CD4-positive, alpha-beta memory T cell (primary cell): ENCODE measurements at regions of chr9 and their contacts with region 1.

Region 1: GRCh38 chr9:32579706-32580331 is 6.9 kb upstream of the NDUFB6 start:
- DNase-seq: peak; percentile 68 to 75 (median 72)
- H3K4me3 ChIP-seq: no peak overlapping the region
- H3K4me3 Mint-ChIP-seq: no peak overlapping the region
- H3K27ac ChIP-seq: no peak overlapping the region
- H3K27ac Mint-ChIP-seq: no peak overlapping the region
- H3K4me1 ChIP-seq: no peaks in the 10 kb centered on the region
- H3K4me1 Mint-ChIP-seq: peaks cover 0 to 5% (median 0%) of the 10 kb centered on the region in 4 donors
- H3K27me3 ChIP-seq: peaks cover 3% of the 10 kb centered on the region
- H3K27me3 Mint-ChIP-seq: peaks cover 7 to 11% of the 10 kb centered on the region in 2 donors

Region 2: DNA sequence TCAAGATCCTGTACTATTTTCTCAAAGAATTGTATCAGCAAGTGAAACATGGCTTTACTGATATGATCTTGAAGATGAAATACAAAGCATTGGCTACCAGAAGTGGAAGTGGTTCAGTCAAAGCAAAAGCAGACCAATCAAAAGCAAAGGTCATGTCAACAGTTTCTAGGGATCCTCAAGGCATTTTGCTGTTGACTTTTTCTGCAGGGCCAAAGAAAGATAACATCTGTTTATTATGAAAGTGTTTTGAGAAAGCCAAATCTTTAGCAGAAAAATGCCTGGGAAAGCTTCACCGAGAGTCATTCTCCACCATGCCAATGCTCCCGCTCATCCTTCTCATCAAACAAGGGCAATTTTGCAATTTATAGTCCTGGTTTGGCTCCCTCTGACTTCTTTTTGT is 285.7 kb before region 1 on chr9:
- CTCF ChIA-PET with region 1: no interaction called
- POLR2A ChIA-PET with region 1: no interaction called
- intact Hi-C with region 1: no loop called
- DNase-seq: no peak
- H3K4me3 ChIP-seq: no peak overlapping the region
- H3K4me3 Mint-ChIP-seq: no peak overlapping the region
- H3K27ac ChIP-seq: no peak overlapping the region
- H3K27ac Mint-ChIP-seq: no peak overlapping the region
- H3K4me1 ChIP-seq: no peaks in the 10 kb centered on the region
- H3K4me1 Mint-ChIP-seq: no peaks in the 10 kb centered on the region
- H3K27me3 ChIP-seq: no peaks in the 10 kb centered on the region
- H3K27me3 Mint-ChIP-seq: peaks cover 4 to 12% of the 10 kb centered on the region in 2 donors

Region 3: DNA sequence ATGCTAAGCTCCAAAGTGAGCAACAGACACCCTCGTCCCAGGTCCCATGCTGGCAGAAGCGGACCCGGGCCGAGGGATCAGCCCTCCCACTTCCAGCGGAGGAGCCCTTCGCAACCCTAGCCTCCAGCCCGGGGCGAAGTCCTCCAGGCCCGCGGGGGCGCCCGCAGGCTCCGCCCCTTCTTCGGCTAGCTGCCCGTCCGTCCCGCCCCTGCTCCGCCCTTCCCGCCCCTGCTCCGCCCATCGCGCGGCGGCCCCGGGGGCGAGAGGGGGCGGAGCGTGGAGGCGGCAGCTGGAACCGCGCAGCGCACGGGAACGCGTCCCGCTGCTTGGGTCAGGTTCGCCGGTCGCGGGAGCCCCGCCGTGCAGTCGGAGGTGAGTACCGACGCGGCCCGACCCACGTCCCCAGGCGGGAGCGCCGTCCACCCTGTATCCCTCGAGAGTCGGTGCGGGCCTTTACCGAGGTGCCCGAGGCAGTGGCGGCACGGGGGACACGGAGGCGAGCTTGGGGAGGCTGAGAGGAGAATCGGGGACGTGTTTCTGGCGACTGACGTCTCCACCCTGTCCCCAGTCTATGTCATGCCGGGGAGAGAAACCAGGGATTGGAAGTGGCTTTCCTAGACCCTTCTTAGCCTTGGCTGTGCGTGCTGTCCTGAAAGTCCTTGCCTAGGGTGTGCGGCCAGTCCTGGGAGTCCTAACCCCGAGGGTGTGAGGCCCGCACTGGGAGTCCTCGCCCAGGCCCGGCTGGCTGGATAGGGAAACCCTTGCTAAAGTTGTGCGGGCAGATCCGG is 195.3 kb before region 1 on chr9 and contains the start of gene ACO1:
- CTCF ChIA-PET with region 1: interaction called, 659 read pairs
- POLR2A ChIA-PET with region 1: interaction called, 48 read pairs
- intact Hi-C with region 1: loop called (anchors 1 kb)
- DNase-seq: peak; percentile 77 to 89 (median 84)
- H3K4me3 ChIP-seq: peak within 1 kb of the TSS; percentile 79 to 91
- H3K4me3 Mint-ChIP-seq: peak within 1 kb of the TSS; percentile 81 to 90 (median 88)
- H3K27ac ChIP-seq: peak within 1 kb of the TSS; percentile 55
- H3K27ac Mint-ChIP-seq: peak within 1 kb of the TSS in 6 of 7 donors; percentile 3 to 83 (median 58)
- H3K4me1 ChIP-seq: peaks cover 20% of the 10 kb centered on the region
- H3K4me1 Mint-ChIP-seq: peaks cover 12 to 20% (median 17%) of the 10 kb centered on the region in 4 donors
- H3K27me3 ChIP-seq: no peaks in the 10 kb centered on the region
- H3K27me3 Mint-ChIP-seq: peaks cover 3 to 7% of the 10 kb centered on the region in 2 donors
- total RNA-seq, gene ACO1: 7.9 to 9.1 TPM

Region 4: DNA sequence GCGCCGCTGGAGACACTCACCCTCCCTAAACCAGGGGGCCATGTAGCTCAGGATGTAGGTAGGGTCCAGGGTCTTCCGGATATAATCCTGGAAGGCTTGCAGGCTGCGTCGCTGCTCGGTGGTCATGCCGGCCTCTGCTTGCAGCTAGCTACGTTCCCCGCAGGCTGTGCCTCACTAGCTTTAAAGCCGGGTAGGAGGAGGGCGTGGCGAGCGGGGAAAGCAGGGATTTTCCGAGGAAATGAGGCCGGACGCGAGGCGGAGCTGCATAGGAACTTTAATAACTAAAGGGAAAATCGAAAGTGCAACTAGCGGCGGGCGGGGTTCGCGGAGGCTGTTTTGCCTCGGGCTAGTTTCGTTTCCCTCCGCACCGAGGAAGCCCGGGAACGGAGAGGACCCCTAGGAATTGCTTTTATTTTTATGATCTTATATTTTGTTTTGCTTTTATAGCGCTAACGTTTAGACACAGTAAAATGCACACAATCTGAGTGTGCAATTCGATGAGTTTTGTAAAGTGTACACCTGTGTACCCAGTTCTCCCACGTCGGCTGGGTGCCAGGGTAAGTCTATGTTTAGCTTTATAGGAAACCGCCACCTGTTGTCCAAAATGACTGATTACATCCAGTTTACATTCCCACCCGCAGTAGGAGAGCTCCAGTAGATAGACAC is 53.6 kb before region 1 on chr9 and contains the start of gene RIGI:
- CTCF ChIA-PET with region 1: interaction called, 50 read pairs
- POLR2A ChIA-PET with region 1: no interaction called
- intact Hi-C with region 1: no loop called
- DNase-seq: peak; percentile 80 to 92 (median 81)
- H3K4me3 ChIP-seq: peak within 1 kb of the TSS; percentile 78 to 93
- H3K4me3 Mint-ChIP-seq: peak within 1 kb of the TSS; percentile 91 to 99 (median 97)
- H3K27ac ChIP-seq: peak within 1 kb of the TSS; percentile 94
- H3K27ac Mint-ChIP-seq: peak within 1 kb of the TSS; percentile 93 to 98 (median 97)
- H3K4me1 ChIP-seq: peaks cover 46% of the 10 kb centered on the region
- H3K4me1 Mint-ChIP-seq: peaks cover 40 to 70% (median 54%) of the 10 kb centered on the region in 4 donors
- H3K27me3 ChIP-seq: no peaks in the 10 kb centered on the region
- H3K27me3 Mint-ChIP-seq: no peaks in the 10 kb centered on the region
- total RNA-seq, gene RIGI: 29.0 to 32.0 TPM

Region 5: DNA sequence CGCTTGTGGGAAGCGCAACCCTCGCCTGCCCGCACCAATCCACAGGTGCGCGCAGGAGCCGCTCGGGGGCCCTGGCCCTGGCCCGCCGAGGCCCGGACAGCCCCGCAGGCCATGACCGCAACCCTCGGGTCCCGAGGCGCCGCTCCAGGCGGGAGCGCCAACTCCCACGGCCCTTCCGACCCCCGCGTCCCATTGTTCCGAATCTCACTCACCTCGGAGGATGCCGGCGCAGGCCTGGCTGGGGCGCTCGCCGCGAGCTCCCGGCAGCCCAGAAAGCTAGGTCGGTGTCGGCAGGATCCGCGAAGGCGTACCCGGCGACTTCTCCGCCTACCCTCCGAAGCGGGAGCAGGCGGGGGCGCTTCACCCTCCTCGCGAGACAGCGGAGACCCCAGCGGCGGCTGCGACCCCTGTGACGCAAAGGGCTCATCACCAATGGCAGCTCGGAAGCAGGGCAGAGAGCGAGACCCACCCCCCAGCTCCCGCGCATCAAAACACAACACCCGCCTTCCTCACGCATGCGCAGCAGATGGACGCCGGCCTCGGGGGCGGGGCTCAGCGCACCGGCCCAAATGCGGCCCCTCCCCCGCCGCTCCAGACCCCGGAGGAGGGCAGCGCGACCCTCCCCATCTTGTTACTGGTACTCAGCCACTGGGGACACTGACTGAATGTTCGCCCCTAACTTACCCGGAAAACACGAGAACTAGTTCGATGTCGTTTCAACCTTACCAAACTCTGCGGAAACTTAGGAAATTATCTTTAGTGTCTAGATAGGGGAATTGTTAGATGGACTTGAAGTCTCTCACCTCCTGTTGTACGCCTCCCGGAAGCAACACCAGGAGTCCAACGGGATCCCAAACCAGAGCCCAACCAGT is 29.0 kb before region 1 on chr9:
- CTCF ChIA-PET with region 1: interaction called, 72 read pairs
- POLR2A ChIA-PET with region 1: interaction called, 69 read pairs
- intact Hi-C with region 1: no loop called
- DNase-seq: peak; percentile 95 to 99 (median 95)
- H3K4me3 ChIP-seq: peak overlapping the region; percentile 93 to 98
- H3K4me3 Mint-ChIP-seq: peak overlapping the region; percentile 92 to 99 (median 97)
- H3K27ac ChIP-seq: peak overlapping the region; percentile 88
- H3K27ac Mint-ChIP-seq: peak overlapping the region; percentile 92 to 100 (median 98)
- H3K4me1 ChIP-seq: peaks cover 47% of the 10 kb centered on the region
- H3K4me1 Mint-ChIP-seq: peaks cover 28 to 66% (median 49%) of the 10 kb centered on the region in 4 donors
- H3K27me3 ChIP-seq: no peaks in the 10 kb centered on the region
- H3K27me3 Mint-ChIP-seq: no peaks in the 10 kb centered on the region

Region 6: DNA sequence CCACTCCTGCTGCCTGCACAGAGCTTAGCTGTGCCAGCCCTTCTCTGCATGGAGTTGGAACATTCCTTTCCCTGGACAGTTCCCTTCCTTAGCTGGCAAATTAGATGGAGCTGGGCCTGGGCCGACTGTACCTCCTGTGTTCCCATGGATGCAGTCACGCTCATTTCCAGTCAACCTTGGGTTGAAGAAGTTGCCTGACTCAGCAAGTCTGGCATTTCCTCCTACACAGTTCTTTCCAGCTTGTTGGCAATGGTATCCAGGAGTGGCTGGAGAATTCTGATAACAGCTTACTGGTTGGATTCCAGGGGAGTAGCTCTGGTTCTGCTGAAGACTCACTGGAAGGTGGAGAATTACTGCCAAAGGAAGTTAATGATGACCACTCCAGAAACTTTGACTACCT is 64.9 kb after region 1 on chr9:
- CTCF ChIA-PET with region 1: no interaction called
- POLR2A ChIA-PET with region 1: no interaction called
- intact Hi-C with region 1: no loop called
- DNase-seq: no peak
- H3K4me3 ChIP-seq: no peak overlapping the region
- H3K4me3 Mint-ChIP-seq: no peak overlapping the region
- H3K27ac ChIP-seq: no peak overlapping the region
- H3K27ac Mint-ChIP-seq: no peak overlapping the region
- H3K4me1 ChIP-seq: no peaks in the 10 kb centered on the region
- H3K4me1 Mint-ChIP-seq: no peaks in the 10 kb centered on the region
- H3K27me3 ChIP-seq: no peaks in the 10 kb centered on the region
- H3K27me3 Mint-ChIP-seq: peaks cover 21 to 24% of the 10 kb centered on the region in 2 donors

Region 7: GRCh38 chr9:32968101-32969011 is 388.5 kb after region 1 on chr9:
- CTCF ChIA-PET with region 1: interaction called, 47 read pairs
- POLR2A ChIA-PET with region 1: no interaction called
- intact Hi-C with region 1: loop called (anchors 1 kb)
- DNase-seq: peak in 4 of 5 donors; percentile 28 to 53 (median 38)
- H3K4me3 ChIP-seq: no peak overlapping the region
- H3K4me3 Mint-ChIP-seq: no peak overlapping the region
- H3K27ac ChIP-seq: no peak overlapping the region
- H3K27ac Mint-ChIP-seq: peak overlapping the region in 1 of 7 donors; percentile 65
- H3K4me1 ChIP-seq: no peaks in the 10 kb centered on the region
- H3K4me1 Mint-ChIP-seq: peaks cover 2 to 4% (median 3%) of the 10 kb centered on the region in 4 donors
- H3K27me3 ChIP-seq: no peaks in the 10 kb centered on the region
- H3K27me3 Mint-ChIP-seq: no peaks in the 10 kb centered on the region

Region 8: GRCh38 chr9:33024966-33025571 is 445.2 kb after region 1 on chr9 and contains the start of gene DNAJA1:
- CTCF ChIA-PET with region 1: no interaction called
- POLR2A ChIA-PET with region 1: no interaction called
- intact Hi-C with region 1: no loop called
- DNase-seq: peak; percentile 92 to 98 (median 97)
- H3K4me3 ChIP-seq: peak within 1 kb of the TSS; percentile 96 to 100
- H3K4me3 Mint-ChIP-seq: peak within 1 kb of the TSS; percentile 92 to 99 (median 96)
- H3K27ac ChIP-seq: peak within 1 kb of the TSS; percentile 100
- H3K27ac Mint-ChIP-seq: peak within 1 kb of the TSS; percentile 94 to 98 (median 97)
- H3K4me1 ChIP-seq: peaks cover 63% of the 10 kb centered on the region
- H3K4me1 Mint-ChIP-seq: peaks cover 41 to 82% (median 66%) of the 10 kb centered on the region in 4 donors
- H3K27me3 ChIP-seq: no peaks in the 10 kb centered on the region
- H3K27me3 Mint-ChIP-seq: no peaks in the 10 kb centered on the region
- total RNA-seq, gene DNAJA1: 79.8 to 84.4 TPM

Region 9: DNA sequence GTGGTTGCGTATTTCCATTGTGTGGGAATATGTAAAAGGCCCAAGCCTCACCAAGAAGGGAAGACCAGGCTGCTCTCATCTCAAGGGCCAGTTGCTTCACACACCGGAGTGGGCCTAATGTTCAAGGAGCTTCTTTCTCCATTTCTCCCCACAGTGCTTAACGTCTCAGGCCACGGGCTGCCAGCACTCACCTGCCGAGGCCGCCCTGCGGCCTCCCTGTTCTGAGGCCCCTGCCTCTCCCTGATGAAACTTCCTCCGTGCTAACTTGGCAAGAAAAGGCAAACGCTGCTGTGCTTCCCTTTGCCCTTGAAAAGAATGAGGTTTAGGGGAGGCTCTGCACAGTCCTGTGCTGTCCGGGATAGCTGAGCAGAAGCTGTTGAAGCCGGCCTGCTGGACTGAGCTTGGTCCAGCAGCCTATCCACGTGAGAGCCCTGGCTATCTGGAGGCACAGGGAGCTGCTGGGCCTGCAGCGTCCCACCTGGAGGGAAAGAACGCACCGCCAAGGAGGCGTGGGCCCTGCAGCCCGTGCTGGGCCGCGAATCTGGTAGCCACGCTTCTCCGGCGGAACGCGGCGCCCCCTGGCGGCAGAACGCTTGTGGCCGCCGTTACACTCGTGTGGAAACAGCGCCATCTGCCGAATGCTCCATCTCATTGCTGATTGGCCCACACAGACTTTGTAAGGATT is 1142.0 kb after region 1 on chr9:
- CTCF ChIA-PET with region 1: no interaction called
- POLR2A ChIA-PET with region 1: no interaction called
- intact Hi-C with region 1: loop called (anchors 10 kb)
- DNase-seq: peak; percentile 79 to 85 (median 84)
- H3K4me3 ChIP-seq: no peak overlapping the region
- H3K4me3 Mint-ChIP-seq: peak overlapping the region in 1 of 8 donors; percentile 27
- H3K27ac ChIP-seq: no peak overlapping the region
- H3K27ac Mint-ChIP-seq: peak overlapping the region in 1 of 7 donors; percentile 63
- H3K4me1 ChIP-seq: no peaks in the 10 kb centered on the region
- H3K4me1 Mint-ChIP-seq: peaks cover 0 to 11% (median under 1%) of the 10 kb centered on the region in 4 donors
- H3K27me3 ChIP-seq: no peaks in the 10 kb centered on the region
- H3K27me3 Mint-ChIP-seq: peaks cover 6 to 7% of the 10 kb centered on the region in 2 donors